ENCODE measurements at regions of chr3 and their contacts with region 1.

Region 1: GRCh38 chr3:186930641-186931531 is 560 bp downstream of the ST6GAL1 start:
- DNase-seq: peak; percentile 74 to 84 (median 78)
- H3K4me3 ChIP-seq: peak overlapping the region; percentile 85 to 92
- H3K4me3 Mint-ChIP-seq: peak overlapping the region; percentile 91 to 100 (median 99)
- H3K27ac ChIP-seq: peak overlapping the region; percentile 81
- H3K27ac Mint-ChIP-seq: peak overlapping the region; percentile 90 to 98 (median 96)
- H3K4me1 ChIP-seq: peaks cover 37% of the 10 kb centered on the region
- H3K4me1 Mint-ChIP-seq: peaks cover 22 to 58% (median 39%) of the 10 kb centered on the region in 4 donors
- H3K27me3 ChIP-seq: no peaks in the 10 kb centered on the region
- H3K27me3 Mint-ChIP-seq: no peaks in the 10 kb centered on the region

Region 2: GRCh38 chr3:186635532-186635931 is 295.4 kb before region 1 on chr3:
- CTCF ChIA-PET with region 1: no interaction called
- POLR2A ChIA-PET with region 1: no interaction called
- intact Hi-C with region 1: no loop called
- DNase-seq: no peak
- H3K4me3 ChIP-seq: no peak overlapping the region
- H3K4me3 Mint-ChIP-seq: no peak overlapping the region
- H3K27ac ChIP-seq: no peak overlapping the region
- H3K27ac Mint-ChIP-seq: no peak overlapping the region
- H3K4me1 ChIP-seq: no peaks in the 10 kb centered on the region
- H3K4me1 Mint-ChIP-seq: peaks cover 0 to 1% (median 0%) of the 10 kb centered on the region in 4 donors
- H3K27me3 ChIP-seq: no peaks in the 10 kb centered on the region
- H3K27me3 Mint-ChIP-seq: peaks cover 7 to 15% of the 10 kb centered on the region in 2 donors

Region 3: DNA sequence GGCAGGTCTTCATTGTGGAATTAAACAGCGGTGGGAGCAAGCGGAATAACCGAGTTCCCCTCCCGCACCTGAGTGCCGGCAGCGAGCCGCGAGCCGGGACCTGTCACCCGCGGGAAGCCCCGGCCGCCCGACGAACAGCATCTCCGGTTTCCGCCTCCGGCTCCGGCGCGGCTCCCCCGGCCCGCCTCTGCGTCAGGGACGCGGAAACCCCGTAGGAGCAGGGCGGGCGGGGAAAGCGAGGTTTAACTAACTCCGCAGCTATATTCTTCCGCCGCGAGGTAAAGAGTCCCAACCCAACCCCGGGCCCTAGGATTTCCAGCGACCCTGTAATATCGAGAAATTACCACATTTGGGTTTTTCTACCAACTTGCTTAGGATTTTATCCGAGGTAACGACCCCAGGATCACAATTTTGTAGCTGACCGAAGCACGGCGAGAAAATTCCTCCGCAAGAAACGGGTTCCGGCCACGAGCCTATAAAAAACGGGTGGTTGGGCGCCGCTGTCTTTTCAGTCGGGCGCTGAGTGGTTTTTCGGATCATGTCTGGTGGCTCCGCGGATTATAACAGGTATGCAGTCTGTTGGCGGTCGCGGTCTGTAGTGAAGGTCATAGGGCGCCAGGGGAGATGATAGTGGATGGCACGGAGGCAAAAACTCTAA is 147.7 kb before region 1 on chr3 and contains the start of gene EIF4A2:
- CTCF ChIA-PET with region 1: no interaction called
- POLR2A ChIA-PET with region 1: interaction called, 30 read pairs
- intact Hi-C with region 1: loop called (anchors 1 kb)
- DNase-seq: peak; percentile 91 to 93 (median 93)
- H3K4me3 ChIP-seq: peak within 1 kb of the TSS; percentile 86 to 97
- H3K4me3 Mint-ChIP-seq: peak within 1 kb of the TSS; percentile 95 to 100 (median 100)
- H3K27ac ChIP-seq: peak within 1 kb of the TSS; percentile 98
- H3K27ac Mint-ChIP-seq: peak within 1 kb of the TSS; percentile 97 to 100 (median 100)
- H3K4me1 ChIP-seq: peaks cover 38% of the 10 kb centered on the region
- H3K4me1 Mint-ChIP-seq: peaks cover 39 to 63% (median 46%) of the 10 kb centered on the region in 4 donors
- H3K27me3 ChIP-seq: no peaks in the 10 kb centered on the region
- H3K27me3 Mint-ChIP-seq: peaks cover 0 to 1% of the 10 kb centered on the region in 2 donors
- total RNA-seq, gene EIF4A2: 589 to 632 TPM

Region 4: DNA sequence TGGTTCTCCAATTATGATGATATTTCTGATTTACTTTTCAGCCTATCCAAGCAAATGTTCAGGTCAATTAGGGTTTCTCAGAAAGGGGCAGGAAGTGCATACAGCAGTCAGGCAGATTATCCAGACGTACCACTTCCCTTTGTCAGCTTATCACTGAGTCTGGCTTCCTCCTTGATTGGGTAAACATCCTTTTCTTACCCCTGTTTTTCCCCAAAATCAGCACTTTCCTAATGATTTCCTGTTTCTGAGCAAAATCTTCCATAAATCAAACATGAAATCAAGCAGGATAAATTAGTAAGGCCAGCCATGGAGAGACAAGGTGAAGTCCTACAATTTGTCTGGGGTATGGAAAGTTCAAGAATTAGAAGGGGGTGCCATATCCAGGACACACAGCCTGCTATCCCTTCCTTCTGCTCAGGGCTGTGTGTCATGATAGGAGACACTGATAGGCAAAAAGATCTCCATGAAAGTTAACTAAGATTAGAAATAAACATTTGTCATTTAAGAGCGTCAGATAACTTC is 59.4 kb before region 1 on chr3:
- CTCF ChIA-PET with region 1: interaction called, 3 read pairs
- POLR2A ChIA-PET with region 1: interaction called, 15 read pairs
- intact Hi-C with region 1: no loop called
- DNase-seq: peak in 2 of 5 donors; percentile 18 to 21
- H3K4me3 ChIP-seq: no peak overlapping the region
- H3K4me3 Mint-ChIP-seq: peak overlapping the region in 6 of 8 donors; percentile 21 to 66 (median 56)
- H3K27ac ChIP-seq: no peak overlapping the region
- H3K27ac Mint-ChIP-seq: peak overlapping the region; percentile 23 to 96 (median 85)
- H3K4me1 ChIP-seq: peaks cover 20% of the 10 kb centered on the region
- H3K4me1 Mint-ChIP-seq: peaks cover 16 to 32% (median 23%) of the 10 kb centered on the region in 4 donors
- H3K27me3 ChIP-seq: no peaks in the 10 kb centered on the region
- H3K27me3 Mint-ChIP-seq: no peaks in the 10 kb centered on the region

Region 5: GRCh38 chr3:186915806-186916796 is 14.8 kb before region 1 on chr3:
- CTCF ChIA-PET with region 1: interaction called, 67 read pairs
- POLR2A ChIA-PET with region 1: interaction called, 136 read pairs
- intact Hi-C with region 1: no loop called
- DNase-seq: peak in 1 of 5 donors; percentile 11
- H3K4me3 ChIP-seq: no peak overlapping the region
- H3K4me3 Mint-ChIP-seq: peak overlapping the region in 7 of 8 donors; percentile 3 to 86 (median 50)
- H3K27ac ChIP-seq: no peak overlapping the region
- H3K27ac Mint-ChIP-seq: peak overlapping the region in 5 of 7 donors; percentile 20 to 84 (median 66)
- H3K4me1 ChIP-seq: peaks cover 28% of the 10 kb centered on the region
- H3K4me1 Mint-ChIP-seq: peaks cover 24 to 53% (median 35%) of the 10 kb centered on the region in 4 donors
- H3K27me3 ChIP-seq: no peaks in the 10 kb centered on the region
- H3K27me3 Mint-ChIP-seq: no peaks in the 10 kb centered on the region

Region 6: GRCh38 chr3:187025656-187026316 is 94.9 kb after region 1 on chr3:
- CTCF ChIA-PET with region 1: interaction called, 20 read pairs
- POLR2A ChIA-PET with region 1: interaction called, 83 read pairs
- intact Hi-C with region 1: loop called (anchors 1 kb)
- DNase-seq: peak in 3 of 5 donors; percentile 18 to 49 (median 35)
- H3K4me3 ChIP-seq: peak overlapping the region; percentile 57 to 89
- H3K4me3 Mint-ChIP-seq: peak overlapping the region; percentile 81 to 97 (median 92)
- H3K27ac ChIP-seq: peak overlapping the region; percentile 68
- H3K27ac Mint-ChIP-seq: peak overlapping the region; percentile 86 to 98 (median 92)
- H3K4me1 ChIP-seq: peaks cover 82% of the 10 kb centered on the region
- H3K4me1 Mint-ChIP-seq: peaks cover 48 to 80% (median 62%) of the 10 kb centered on the region in 4 donors
- H3K27me3 ChIP-seq: no peaks in the 10 kb centered on the region
- H3K27me3 Mint-ChIP-seq: no peaks in the 10 kb centered on the region

Region 7: GRCh38 chr3:187101184-187102072 is 170.5 kb after region 1 on chr3:
- CTCF ChIA-PET with region 1: interaction called, 10 read pairs
- POLR2A ChIA-PET with region 1: interaction called, 4 read pairs
- intact Hi-C with region 1: no loop called
- DNase-seq: peak; percentile 43 to 57 (median 48)
- H3K4me3 ChIP-seq: peak overlapping the region; percentile 17 to 27
- H3K4me3 Mint-ChIP-seq: peak overlapping the region; percentile 70 to 91 (median 84)
- H3K27ac ChIP-seq: peak overlapping the region; percentile 18
- H3K27ac Mint-ChIP-seq: peak overlapping the region; percentile 4 to 93 (median 88)
- H3K4me1 ChIP-seq: peaks cover 23% of the 10 kb centered on the region
- H3K4me1 Mint-ChIP-seq: peaks cover 26 to 35% (median 28%) of the 10 kb centered on the region in 4 donors
- H3K27me3 ChIP-seq: no peaks in the 10 kb centered on the region
- H3K27me3 Mint-ChIP-seq: no peaks in the 10 kb centered on the region

Measured in CD4-positive, alpha-beta memory T cell (primary cell).